MCF 10A (cell line): ENCODE measurements at regions of chr15 and their contacts with region 1.

Region 1: DNA sequence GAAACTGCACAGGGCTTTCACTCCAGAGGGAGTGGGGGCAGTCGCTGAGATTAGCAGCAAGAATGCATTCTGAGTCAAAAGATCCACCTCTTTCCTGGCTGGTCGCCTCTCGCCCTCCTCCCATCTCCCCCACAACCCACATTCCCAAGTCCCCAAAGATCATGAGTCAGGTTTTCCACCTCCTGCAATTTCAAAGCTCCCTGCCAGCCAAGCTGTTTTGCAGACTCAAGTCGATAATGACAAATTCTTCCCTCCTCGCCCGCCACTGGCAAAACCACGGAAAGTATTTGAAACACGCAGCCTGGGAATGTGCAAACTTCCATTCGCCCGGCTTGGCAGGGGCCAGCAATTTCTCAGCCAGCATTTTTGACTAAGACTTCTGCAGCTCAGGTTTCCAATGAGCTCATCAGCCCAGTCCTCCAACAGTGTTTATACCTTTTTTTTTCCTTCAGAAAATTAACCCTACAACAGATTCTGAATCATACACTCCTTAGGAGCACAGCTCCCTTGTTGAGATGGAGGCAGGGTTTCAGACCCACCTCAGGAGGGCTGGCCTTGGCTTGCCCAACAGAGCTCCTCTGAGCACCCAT is 181.4 kb downstream of the SMAD6 start:
- DNase-seq: peak; percentile 99
- H3K4me3 Mint-ChIP-seq: peak overlapping the region; percentile 41
- H3K27ac Mint-ChIP-seq: peak overlapping the region; percentile 75
- H3K4me1 Mint-ChIP-seq: peaks cover 36% of the 10 kb centered on the region
- H3K27me3 Mint-ChIP-seq: no peaks in the 10 kb centered on the region
- CTCF ChIP-seq: no peak

Region 2: DNA sequence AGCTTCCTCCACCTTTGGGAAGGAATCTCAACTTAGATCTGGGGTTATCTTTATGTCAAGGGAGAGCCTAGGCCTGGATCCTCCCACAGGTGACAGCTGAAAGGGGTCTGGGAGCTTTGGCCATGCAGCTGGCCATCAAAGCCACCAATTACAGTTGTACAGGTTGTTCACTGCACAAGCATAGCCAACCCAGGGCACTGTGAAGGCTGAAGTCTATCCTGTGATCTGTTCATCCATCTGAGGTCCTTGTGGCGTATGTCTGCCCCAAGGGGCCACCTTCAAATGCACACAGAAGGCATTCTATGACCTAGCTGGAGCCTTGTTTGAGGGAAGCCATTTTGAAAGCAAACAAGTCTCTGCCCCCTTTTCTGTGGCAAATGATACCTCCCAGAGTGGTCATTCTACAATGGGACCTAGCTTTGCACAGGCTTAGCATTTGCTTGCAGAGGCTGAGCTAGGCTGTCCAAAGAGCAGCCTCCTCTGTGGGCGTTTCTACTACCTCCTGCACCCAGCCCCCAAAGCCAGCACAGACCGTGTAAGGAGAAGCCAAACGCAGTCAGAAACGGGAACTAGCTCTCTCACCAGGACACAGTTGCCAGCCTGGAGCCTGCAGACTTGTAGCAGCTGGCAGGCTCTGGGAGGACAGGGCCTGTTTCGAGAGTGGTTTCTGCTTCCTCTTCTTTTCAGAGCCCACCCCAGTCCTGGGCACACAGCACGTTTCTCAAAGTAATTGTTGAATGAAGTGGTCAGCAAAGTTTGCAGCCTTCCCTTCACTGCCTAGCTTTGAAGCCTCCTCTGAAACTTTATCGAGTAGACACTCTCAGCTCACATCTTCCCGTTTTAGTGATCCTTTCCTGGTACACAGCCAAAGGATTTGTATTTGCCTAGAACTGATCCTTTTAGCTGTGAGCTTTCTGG is 24.7 kb after region 1 on chr15:
- CTCF ChIA-PET with region 1: interaction called, 4 read pairs
- POLR2A ChIA-PET with region 1: interaction called, 3 read pairs
- intact Hi-C with region 1: loop called (anchors 1 kb)
- DNase-seq: no peak
- H3K4me3 Mint-ChIP-seq: no peak overlapping the region
- H3K27ac Mint-ChIP-seq: no peak overlapping the region
- H3K4me1 Mint-ChIP-seq: peaks cover 6% of the 10 kb centered on the region
- H3K27me3 Mint-ChIP-seq: no peaks in the 10 kb centered on the region
- CTCF ChIP-seq: no peak

Region 3: GRCh38 chr15:66931768-66932633 is 48.6 kb after region 1 on chr15:
- CTCF ChIA-PET with region 1: interaction called, 3 read pairs
- POLR2A ChIA-PET with region 1: interaction called, 5 read pairs
- intact Hi-C with region 1: loop called (anchors 2 kb)
- DNase-seq: peak; percentile 75
- H3K4me3 Mint-ChIP-seq: peak overlapping the region; percentile 7
- H3K27ac Mint-ChIP-seq: peak overlapping the region; percentile 3
- H3K4me1 Mint-ChIP-seq: peaks cover 26% of the 10 kb centered on the region
- H3K27me3 Mint-ChIP-seq: no peaks in the 10 kb centered on the region
- CTCF ChIP-seq: no peak

Region 4: GRCh38 chr15:67433495-67434099 is 550.2 kb after region 1 on chr15:
- CTCF ChIA-PET with region 1: no interaction called
- POLR2A ChIA-PET with region 1: no interaction called
- intact Hi-C with region 1: no loop called
- DNase-seq: peak; percentile 54
- H3K4me3 Mint-ChIP-seq: no peak overlapping the region
- H3K27ac Mint-ChIP-seq: no peak overlapping the region
- H3K4me1 Mint-ChIP-seq: no peaks in the 10 kb centered on the region
- H3K27me3 Mint-ChIP-seq: no peaks in the 10 kb centered on the region
- CTCF ChIP-seq: peak; percentile 73